A549 (cell line): ENCODE measurements at regions of chrX and their contacts with region 1.

Region 1: DNA sequence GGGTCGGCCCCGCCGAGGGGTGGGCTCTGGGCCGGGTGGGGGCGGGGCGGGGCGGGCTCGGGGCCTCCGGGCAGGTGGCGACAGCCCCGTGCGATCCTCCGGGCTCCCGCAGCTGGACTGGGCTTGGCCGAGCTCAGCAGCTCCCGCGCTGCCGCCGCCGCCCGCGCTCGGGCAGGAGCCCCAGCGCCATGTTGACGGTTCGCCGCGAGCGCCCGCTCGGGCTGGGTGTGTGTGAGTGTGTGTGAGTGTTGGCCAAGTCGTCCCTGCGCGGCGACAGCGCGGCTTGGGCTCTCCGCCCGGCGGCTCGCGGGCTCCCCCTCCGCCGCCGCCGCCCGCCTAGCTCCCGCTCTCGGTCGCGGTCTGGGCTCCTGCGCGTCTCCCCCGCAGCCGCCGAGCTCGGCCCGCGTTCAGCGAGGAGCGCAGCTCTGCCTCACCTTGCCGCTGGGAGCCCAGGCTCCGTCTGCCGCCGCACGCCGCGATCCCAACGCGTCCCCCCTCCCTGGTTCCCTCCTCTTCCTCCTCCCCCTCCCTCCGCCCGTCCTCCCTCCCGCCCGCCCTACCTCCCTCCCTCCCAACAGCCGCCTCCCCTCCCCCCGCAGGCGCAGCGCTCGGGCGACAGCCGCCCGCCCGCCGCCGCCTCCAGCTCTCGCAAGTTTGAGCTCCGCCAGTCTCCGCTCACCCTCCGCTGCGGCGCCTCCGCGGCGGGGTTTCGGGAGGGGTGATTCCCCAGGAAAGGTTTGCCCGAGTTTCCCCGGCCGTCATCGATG is at the start of gene BCOR:
- DNase-seq: peak; percentile 34 to 80
- ATAC-seq: peak; percentile 56 to 62
- H3K4me3 ChIP-seq: peak within 1 kb of the TSS; percentile 84
- H3K27ac ChIP-seq: peak within 1 kb of the TSS; percentile 98
- H3K4me1 ChIP-seq: peaks cover 25% of the 10 kb centered on the region
- CTCF ChIP-seq: no peak
- EP300 ChIP-seq: no peak
- POLR2A ChIP-seq: peak; percentile 98
- RAD21 ChIP-seq: no peak; a peak in 1 of 5 replicates
- polyA plus RNA-seq, gene BCOR: 12.2 and 21.3 TPM in 2 replicates

Region 2: GRCh38 chrX:40013266-40014195 is 84.1 kb before region 1 on chrX:
- CTCF ChIA-PET with region 1: no interaction called
- POLR2A ChIA-PET with region 1: interaction called, 24 read pairs
- DNase-seq: peak; percentile 28 to 67
- ATAC-seq: peak; percentile 63 to 82
- H3K4me3 ChIP-seq: peak overlapping the region; percentile 88
- H3K27ac ChIP-seq: peak overlapping the region; percentile 96 to 98
- H3K4me1 ChIP-seq: peaks cover 7% of the 10 kb centered on the region
- CTCF ChIP-seq: no peak
- EP300 ChIP-seq: no peak
- POLR2A ChIP-seq: peak; percentile 29
- RAD21 ChIP-seq: no peak

Region 3: GRCh38 chrX:40153335-40154249 is 55.9 kb after region 1 on chrX:
- CTCF ChIA-PET with region 1: interaction called, 6 read pairs
- POLR2A ChIA-PET with region 1: interaction called, 67 read pairs
- DNase-seq: peak; percentile 35 to 41
- ATAC-seq: peak; percentile 10 to 28; a peak in 5 of 6 replicates
- H3K4me3 ChIP-seq: peak overlapping the region; percentile 64
- H3K27ac ChIP-seq: peak overlapping the region; percentile 98 to 99
- H3K4me1 ChIP-seq: peaks cover 19% of the 10 kb centered on the region
- CTCF ChIP-seq: peak; percentile 14; the same call in 1 of the 3 replicates
- EP300 ChIP-seq: no peak
- POLR2A ChIP-seq: peak; percentile 21; the same call in 1 of the 2 replicates
- RAD21 ChIP-seq: 0 out of 5 replicates have a peak, but pooled peaks of 1 of the 2 experiments have one; percentile 5